MCF 10A (cell line): ENCODE measurements at regions of chr6 and their contacts with region 1.

Region 1: DNA sequence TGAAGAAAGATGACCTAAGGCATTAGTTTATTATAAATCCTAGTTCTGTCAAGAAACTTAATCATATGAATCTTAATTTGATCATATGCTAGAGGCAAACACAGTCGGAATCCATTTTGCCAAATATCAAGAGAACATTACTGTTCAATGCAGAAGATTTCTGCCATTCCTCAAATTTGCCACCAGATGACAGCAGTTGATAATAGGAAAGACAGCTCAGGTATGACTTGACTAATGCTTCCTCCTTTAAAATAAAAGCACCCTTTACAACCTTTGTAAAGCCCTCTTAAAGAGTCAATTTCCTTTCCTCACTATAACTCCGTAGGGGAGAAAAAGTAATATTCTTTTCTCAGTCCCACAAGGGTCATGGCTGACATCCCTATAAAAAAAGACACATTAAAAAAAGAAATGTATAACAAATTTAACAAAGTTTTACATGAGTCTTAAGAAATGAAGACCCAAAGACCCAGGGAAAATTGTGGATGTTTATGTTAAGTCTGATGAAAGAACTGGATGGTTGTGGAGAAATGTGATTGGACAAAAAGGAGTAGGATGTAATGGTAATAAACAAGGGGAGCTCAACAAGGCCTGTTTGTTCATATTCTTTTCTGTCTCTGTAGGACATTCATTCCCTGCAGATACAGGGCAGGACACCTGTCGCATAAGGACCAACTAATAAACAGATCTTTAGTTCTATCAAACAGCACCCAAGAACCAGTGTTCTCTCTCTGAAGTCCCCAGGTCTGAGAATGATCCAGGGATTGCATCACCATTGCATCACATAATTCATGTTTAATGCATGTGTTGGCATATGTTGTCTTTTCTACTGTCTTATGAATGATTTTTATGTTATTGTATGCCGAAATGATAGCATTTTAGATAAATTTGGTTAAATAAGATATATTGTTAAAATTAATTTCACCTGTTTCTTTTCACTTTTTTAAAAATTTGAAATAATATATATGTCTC is 23.0 kb upstream of the IL17A start:
- DNase-seq: peak; percentile 59
- H3K4me3 Mint-ChIP-seq: no peak overlapping the region
- H3K27ac Mint-ChIP-seq: peak overlapping the region; percentile 86
- H3K4me1 Mint-ChIP-seq: peaks cover 11% of the 10 kb centered on the region
- H3K27me3 Mint-ChIP-seq: no peaks in the 10 kb centered on the region
- CTCF ChIP-seq: peak; percentile 86

Region 2: GRCh38 chr6:52098634-52099185 is 64.5 kb before region 1 on chr6:
- CTCF ChIA-PET with region 1: interaction called, 5 read pairs
- POLR2A ChIA-PET with region 1: no interaction called
- intact Hi-C with region 1: loop called (anchors 1 kb)
- DNase-seq: peak; percentile 9
- H3K4me3 Mint-ChIP-seq: no peak overlapping the region
- H3K27ac Mint-ChIP-seq: no peak overlapping the region
- H3K4me1 Mint-ChIP-seq: no peaks in the 10 kb centered on the region
- H3K27me3 Mint-ChIP-seq: peaks cover 25% of the 10 kb centered on the region
- CTCF ChIP-seq: peak; percentile 26

Region 3: DNA sequence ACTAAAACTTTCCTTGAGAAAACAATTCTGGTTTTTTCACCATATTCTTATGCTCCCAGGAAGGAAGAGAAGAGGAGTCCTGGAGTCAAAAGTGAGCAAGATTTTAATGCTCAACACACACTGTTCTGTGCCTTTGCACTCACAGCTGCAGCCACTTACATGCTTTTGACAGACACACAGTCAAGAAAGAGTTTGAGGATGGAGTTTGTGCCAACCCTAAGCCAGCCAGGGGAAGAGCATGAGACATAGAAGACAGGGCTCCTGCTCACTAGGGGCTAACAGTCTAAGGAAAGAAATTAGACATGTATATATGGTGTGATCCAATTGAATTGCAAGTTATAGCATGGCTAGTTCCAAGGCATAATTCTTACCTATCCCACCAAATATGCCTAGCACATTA is 14.1 kb before region 1 on chr6:
- CTCF ChIA-PET with region 1: interaction called, 10 read pairs
- POLR2A ChIA-PET with region 1: no interaction called
- intact Hi-C with region 1: no loop called
- DNase-seq: no peak
- H3K4me3 Mint-ChIP-seq: no peak overlapping the region
- H3K27ac Mint-ChIP-seq: no peak overlapping the region
- H3K4me1 Mint-ChIP-seq: no peaks in the 10 kb centered on the region
- H3K27me3 Mint-ChIP-seq: peaks cover 26% of the 10 kb centered on the region
- CTCF ChIP-seq: no peak

Region 4: GRCh38 chr6:52233975-52234823 is 71.0 kb after region 1 on chr6:
- CTCF ChIA-PET with region 1: interaction called, 90 read pairs
- POLR2A ChIA-PET with region 1: interaction called, 3 read pairs
- intact Hi-C with region 1: loop called (anchors 1 kb)
- DNase-seq: peak; percentile 83
- H3K4me3 Mint-ChIP-seq: no peak overlapping the region
- H3K27ac Mint-ChIP-seq: no peak overlapping the region
- H3K4me1 Mint-ChIP-seq: no peaks in the 10 kb centered on the region
- H3K27me3 Mint-ChIP-seq: peaks cover 38% of the 10 kb centered on the region
- CTCF ChIP-seq: peak; percentile 67

Region 5: DNA sequence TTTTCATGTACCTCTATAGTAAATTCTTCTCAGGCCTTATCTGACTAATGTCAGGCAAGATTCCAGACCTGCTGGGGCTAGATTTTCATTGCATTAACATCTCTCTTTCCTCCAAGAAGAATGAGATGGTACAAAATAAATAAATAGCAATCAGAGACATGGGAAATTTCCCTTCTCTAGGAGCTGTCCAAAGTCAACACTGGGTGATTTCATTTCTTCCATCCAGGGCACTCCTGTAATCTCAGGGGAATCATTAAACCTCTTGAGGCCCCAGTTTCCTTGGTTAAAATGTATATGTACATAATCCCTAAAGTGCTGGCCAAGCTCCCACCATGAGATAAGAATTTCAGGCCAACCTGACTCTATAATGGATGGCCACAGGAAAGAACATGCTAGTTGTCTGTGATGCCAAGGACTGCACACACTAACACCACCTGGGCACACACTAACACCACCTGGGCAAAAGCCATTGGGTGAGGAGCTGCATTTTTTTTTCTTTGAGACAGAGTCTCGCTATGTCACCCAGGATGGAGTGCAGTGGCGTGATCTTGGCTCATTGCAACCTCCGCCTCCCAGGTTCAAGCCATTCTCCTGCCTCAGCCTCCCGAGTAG is 80.2 kb after region 1 on chr6:
- CTCF ChIA-PET with region 1: interaction called, 14 read pairs
- POLR2A ChIA-PET with region 1: no interaction called
- intact Hi-C with region 1: no loop called
- DNase-seq: peak; percentile 29
- H3K4me3 Mint-ChIP-seq: no peak overlapping the region
- H3K27ac Mint-ChIP-seq: no peak overlapping the region
- H3K4me1 Mint-ChIP-seq: no peaks in the 10 kb centered on the region
- H3K27me3 Mint-ChIP-seq: peaks cover 9% of the 10 kb centered on the region
- CTCF ChIP-seq: no peak

Region 6: GRCh38 chr6:52399511-52400312 is 236.5 kb after region 1 on chr6:
- CTCF ChIA-PET with region 1: interaction called, 10 read pairs
- POLR2A ChIA-PET with region 1: no interaction called
- intact Hi-C with region 1: loop called (anchors 1 kb)
- DNase-seq: peak; percentile 70
- H3K4me3 Mint-ChIP-seq: no peak overlapping the region
- H3K27ac Mint-ChIP-seq: no peak overlapping the region
- H3K4me1 Mint-ChIP-seq: peaks cover 10% of the 10 kb centered on the region
- H3K27me3 Mint-ChIP-seq: no peaks in the 10 kb centered on the region
- CTCF ChIP-seq: peak; percentile 73